ENCODE measurements at regions of chr1 and their contacts with region 1.

Region 1: GRCh38 chr1:8330271-8331125 is 12.6 kb downstream of the SLC45A1 start:
- DNase-seq: peak in 1 of 6 donors; percentile 47
- ATAC-seq: no peak
- H3K4me3 ChIP-seq: no peak overlapping the region
- H3K27ac ChIP-seq: no peak overlapping the region
- H3K4me1 ChIP-seq: no peaks in the 10 kb centered on the region
- H3K27me3 ChIP-seq: no peaks in the 10 kb centered on the region
- CTCF ChIP-seq: no peak

Region 2: GRCh38 chr1:7989762-7990428 is 340.6 kb before region 1 on chr1:
- intact Hi-C with region 1: loop called in 1 of 3 experiments (anchors 10 kb)
- DNase-seq: no peak
- ATAC-seq: no peak
- H3K4me3 ChIP-seq: no peak overlapping the region
- H3K27ac ChIP-seq: no peak overlapping the region
- H3K4me1 ChIP-seq: no peaks in the 10 kb centered on the region
- H3K27me3 ChIP-seq: no peaks in the 10 kb centered on the region
- CTCF ChIP-seq: no peak

Measured in pancreas (tissue), 10 donors.